Activated naive CD4-positive, alpha-beta T cell treated with anti-CD3 and anti-CD28 coated beads for 36 hours (primary cell): ENCODE measurements at regions of chr14 and their contacts with region 1.

Region 1: DNA sequence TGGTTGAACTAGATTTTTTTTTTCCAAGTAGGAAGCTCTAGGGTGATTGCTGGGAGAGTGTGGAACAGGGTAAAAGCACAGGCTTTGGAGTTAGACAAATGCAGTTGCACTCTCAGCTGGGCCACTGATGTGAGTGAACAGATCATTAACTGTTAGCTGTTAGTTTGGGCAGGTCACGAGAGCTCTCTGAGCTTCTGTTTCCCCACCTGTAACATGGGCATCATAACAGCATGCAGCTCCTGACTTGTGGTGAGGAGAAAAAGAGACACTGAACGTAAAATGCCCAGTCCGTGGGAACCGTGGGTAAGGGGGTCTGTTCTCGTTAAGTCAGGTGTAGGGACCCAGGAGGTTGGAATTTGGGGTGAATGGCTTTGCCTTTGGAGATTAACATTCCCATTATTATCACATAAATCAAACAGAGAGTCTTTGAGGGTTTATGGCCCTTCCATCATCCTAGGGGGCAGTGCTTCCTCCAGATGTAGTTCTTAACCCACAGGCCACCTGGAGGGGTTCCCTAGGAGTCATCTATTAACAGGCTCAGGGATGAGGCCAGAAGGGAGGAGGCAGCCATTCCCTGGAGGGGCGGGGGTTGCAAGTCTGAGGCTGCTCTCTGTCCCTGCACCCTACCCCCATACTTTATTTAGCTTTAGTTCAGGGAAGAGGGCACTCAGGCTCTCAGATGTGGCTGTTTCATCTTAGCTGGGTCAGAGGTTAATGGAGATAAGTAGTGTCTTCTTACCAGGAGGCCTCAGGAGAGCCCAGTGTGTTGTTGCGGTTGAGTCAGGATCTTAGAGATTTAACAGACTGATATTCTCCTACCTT is 135.2 kb downstream of the DACT1 start:
- DNase-seq: no peak
- H3K4me3 Mint-ChIP-seq: no peak overlapping the region
- H3K27ac Mint-ChIP-seq: no peak overlapping the region
- H3K4me1 Mint-ChIP-seq: no peaks in the 10 kb centered on the region
- H3K27me3 Mint-ChIP-seq: no peaks in the 10 kb centered on the region

Region 2: DNA sequence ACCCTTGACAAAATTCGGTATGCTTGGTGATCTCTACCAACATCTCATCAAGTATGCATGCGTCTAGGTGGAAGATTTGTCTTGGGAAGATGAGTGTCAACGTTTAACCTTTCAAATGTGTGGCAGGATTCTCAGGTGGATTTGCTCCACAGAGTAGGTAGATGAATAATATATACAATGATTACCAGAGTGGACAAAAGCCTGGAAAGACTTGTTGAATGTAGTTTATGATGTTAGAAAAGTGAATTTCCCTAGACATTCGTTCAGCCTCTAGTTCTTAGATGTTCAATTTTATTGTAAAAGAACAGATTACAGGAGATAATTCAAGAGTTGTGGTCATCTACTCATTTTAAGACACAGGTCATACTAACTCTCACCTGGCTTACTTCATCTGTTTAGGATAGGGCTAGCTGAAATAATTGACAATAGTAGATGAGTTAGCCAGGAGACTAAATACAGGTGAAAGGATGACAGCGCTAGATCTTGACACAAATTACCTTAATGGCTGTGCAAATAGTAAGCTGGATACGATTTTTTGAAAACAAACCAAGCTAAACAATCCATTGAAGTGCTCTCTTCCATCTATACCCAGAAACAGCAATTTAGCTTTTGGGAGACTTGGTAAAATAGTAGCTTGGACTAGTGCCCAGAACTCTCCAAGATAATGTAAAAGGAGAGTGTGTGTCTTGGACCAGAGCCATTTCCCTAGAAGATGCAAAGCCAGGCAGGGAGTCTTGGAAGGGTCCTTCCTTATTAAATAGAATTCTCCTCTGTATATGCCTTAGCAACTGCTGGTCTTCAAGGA is 32.8 kb after region 1 on chr14:
- CTCF ChIA-PET with region 1: no interaction called
- intact Hi-C with region 1: loop called (anchors 1 kb)
- DNase-seq: no peak
- H3K4me3 Mint-ChIP-seq: no peak overlapping the region
- H3K27ac Mint-ChIP-seq: no peak overlapping the region
- H3K4me1 Mint-ChIP-seq: no peaks in the 10 kb centered on the region
- H3K27me3 Mint-ChIP-seq: no peaks in the 10 kb centered on the region